Caco-2 (cell line): ENCODE measurements at regions of chr17 and their contacts with region 1.

Region 1: DNA sequence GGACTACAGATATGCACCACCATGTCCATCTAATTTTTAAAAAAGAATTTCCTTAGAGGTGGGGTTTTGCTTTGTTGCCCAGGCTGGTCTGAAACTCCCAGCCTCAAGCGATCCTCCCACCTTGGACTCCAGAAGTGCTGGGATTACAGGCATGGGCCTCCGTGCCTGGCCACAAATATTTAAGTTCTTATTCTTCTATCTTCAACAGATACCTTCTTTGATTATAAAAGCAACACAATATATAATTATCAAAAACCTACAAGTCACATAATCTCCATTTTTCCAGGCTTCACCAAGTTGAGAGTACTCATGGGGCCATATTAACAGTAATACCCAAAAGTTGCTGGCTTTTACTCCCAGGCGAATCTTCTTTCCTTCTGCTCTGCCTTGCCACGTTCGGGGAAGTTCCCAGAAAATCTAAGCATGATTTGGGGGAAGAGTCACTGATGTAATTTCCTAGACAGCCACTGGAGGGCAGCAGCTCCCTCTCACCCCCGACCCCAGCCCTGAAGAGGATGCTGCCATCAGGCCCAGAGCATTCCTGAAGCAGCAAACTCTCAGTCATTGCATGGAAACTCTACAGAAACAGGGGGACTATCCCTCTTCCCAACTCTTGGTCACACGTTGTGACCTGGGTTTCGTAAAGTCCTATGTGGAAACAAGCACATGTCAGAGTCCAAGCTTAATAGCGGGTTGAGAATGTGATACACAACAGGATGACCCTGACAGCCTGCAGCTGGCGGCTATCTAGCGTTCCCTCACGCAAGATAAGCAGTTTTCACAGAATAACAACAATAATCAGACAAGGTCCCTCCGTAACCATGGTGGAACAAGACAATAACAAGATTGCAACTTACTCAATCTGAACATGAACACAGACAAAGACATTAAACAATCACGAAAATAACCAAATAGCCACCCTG is 43.9 kb upstream of the DHX40 start:
- DNase-seq: peak; percentile 63 to 78
- H3K4me3 ChIP-seq: no peak overlapping the region
- H3K4me3 Mint-ChIP-seq: peak overlapping the region; percentile 37
- H3K27ac Mint-ChIP-seq: no peak overlapping the region
- H3K4me1 ChIP-seq: no peaks in the 10 kb centered on the region
- H3K4me1 Mint-ChIP-seq: peaks cover 22% of the 10 kb centered on the region
- H3K27me3 ChIP-seq: no peaks in the 10 kb centered on the region
- H3K27me3 Mint-ChIP-seq: peaks cover 5% of the 10 kb centered on the region
- CTCF ChIP-seq: peak; percentile 81 to 87

Region 2: GRCh38 chr17:59498530-59499307 is 22.7 kb before region 1 on chr17:
- CTCF ChIA-PET with region 1: no interaction called
- POLR2A ChIA-PET with region 1: no interaction called
- intact Hi-C with region 1: no loop called
- DNase-seq: no peak
- H3K4me3 ChIP-seq: no peak overlapping the region
- H3K4me3 Mint-ChIP-seq: no peak overlapping the region
- H3K27ac Mint-ChIP-seq: no peak overlapping the region
- H3K4me1 ChIP-seq: no peaks in the 10 kb centered on the region
- H3K4me1 Mint-ChIP-seq: peaks cover 3% of the 10 kb centered on the region
- H3K27me3 ChIP-seq: no peaks in the 10 kb centered on the region
- H3K27me3 Mint-ChIP-seq: no peaks in the 10 kb centered on the region
- CTCF ChIP-seq: no peak

Region 3: DNA sequence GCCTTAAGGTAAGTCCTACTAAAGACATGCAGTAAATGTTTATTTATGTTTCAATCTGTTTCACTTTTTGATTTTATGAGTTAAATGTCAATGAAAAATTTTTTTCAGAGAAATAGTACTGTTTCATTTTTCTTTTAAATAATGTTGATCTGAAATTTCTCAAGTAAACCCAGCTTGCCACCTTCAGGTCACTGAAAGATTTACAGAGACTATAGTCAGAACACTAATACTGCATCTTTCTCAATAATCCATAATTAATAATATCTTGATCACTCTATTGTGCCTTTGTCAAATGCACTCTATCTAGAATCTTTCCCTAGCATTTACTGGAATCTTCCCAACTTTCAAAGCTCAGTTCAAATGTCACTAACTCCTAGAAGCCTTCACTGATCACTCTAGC is 37.5 kb after region 1 on chr17:
- CTCF ChIA-PET with region 1: interaction called, 7 read pairs
- POLR2A ChIA-PET with region 1: no interaction called
- intact Hi-C with region 1: loop called (anchors 1 kb)
- DNase-seq: no peak
- H3K4me3 ChIP-seq: no peak overlapping the region
- H3K4me3 Mint-ChIP-seq: no peak overlapping the region
- H3K27ac Mint-ChIP-seq: no peak overlapping the region
- H3K4me1 ChIP-seq: no peaks in the 10 kb centered on the region
- H3K4me1 Mint-ChIP-seq: peaks cover 6% of the 10 kb centered on the region
- H3K27me3 ChIP-seq: no peaks in the 10 kb centered on the region; the same call in 1 of the 2 replicates
- H3K27me3 Mint-ChIP-seq: peaks cover 9% of the 10 kb centered on the region
- CTCF ChIP-seq: peak; percentile 7 to 9

Region 4: DNA sequence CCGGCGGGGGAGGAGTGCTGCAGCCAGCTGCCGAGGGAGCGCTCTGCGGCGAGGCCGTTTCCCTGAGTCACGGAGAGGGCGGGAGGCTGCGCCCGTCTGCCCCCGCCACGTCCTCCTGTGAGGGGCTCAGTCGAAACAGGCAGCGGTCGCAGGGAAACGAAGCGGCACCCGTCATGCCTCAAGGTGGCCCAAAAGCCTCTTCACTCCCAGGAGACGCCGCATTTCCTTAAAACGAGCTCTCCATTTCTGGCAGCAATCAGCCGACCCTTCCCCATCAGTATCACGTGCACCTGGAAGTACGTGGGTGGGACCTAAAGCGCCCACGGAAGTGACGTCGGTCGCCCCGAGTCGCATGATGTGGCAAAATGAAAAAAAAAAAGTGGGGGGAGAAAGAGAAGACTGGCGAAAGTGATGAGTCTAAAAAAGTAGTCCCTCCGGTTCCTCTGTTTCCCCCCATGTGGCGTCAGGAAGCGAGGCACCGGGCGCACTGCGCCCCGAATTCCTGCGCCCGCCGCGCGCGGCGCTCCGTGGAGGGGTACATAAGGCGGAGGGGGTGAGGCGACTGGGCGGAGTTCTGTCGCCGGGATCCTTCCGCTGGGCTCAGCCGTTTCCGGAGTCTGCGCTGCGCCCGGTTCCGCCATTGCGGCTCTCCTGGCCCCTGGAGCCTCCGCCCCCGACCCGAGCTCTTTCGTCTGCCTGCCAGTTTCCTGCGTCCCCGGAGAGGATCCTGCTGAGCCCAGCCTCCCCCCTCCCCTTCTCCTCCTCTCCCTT is 98.0 kb after region 1 on chr17 and contains the start of gene CLTC:
- CTCF ChIA-PET with region 1: no interaction called
- POLR2A ChIA-PET with region 1: no interaction called
- intact Hi-C with region 1: loop called (anchors 5 kb)
- DNase-seq: peak; percentile 95
- H3K4me3 ChIP-seq: peak within 1 kb of the TSS; percentile 99
- H3K4me3 Mint-ChIP-seq: peak within 1 kb of the TSS; percentile 95
- H3K27ac Mint-ChIP-seq: peak within 1 kb of the TSS; percentile 100
- H3K4me1 ChIP-seq: peaks cover 51% of the 10 kb centered on the region
- H3K4me1 Mint-ChIP-seq: peaks cover 31% of the 10 kb centered on the region
- H3K27me3 ChIP-seq: no peaks in the 10 kb centered on the region
- H3K27me3 Mint-ChIP-seq: no peaks in the 10 kb centered on the region
- CTCF ChIP-seq: no peak
- total RNA-seq, gene CLTC: 289 and 302 TPM in 2 replicates

Region 5: GRCh38 chr17:59641799-59642489 is 120.5 kb after region 1 on chr17:
- CTCF ChIA-PET with region 1: no interaction called
- POLR2A ChIA-PET with region 1: no interaction called
- intact Hi-C with region 1: loop called (anchors 10 kb)
- DNase-seq: no peak
- H3K4me3 ChIP-seq: no peak overlapping the region
- H3K4me3 Mint-ChIP-seq: no peak overlapping the region
- H3K27ac Mint-ChIP-seq: peak overlapping the region; percentile 48
- H3K4me1 ChIP-seq: peaks cover 8% of the 10 kb centered on the region
- H3K4me1 Mint-ChIP-seq: peaks cover 23% of the 10 kb centered on the region
- H3K27me3 ChIP-seq: no peaks in the 10 kb centered on the region
- H3K27me3 Mint-ChIP-seq: no peaks in the 10 kb centered on the region
- CTCF ChIP-seq: no peak